Caco-2 (cell line): ENCODE measurements at regions of chr22 and their contacts with region 1.

Region 1: GRCh38 chr22:23591201-23591791 is 11.2 kb upstream of the IGLL1 start:
- DNase-seq: peak; percentile 63 to 76
- H3K4me3 ChIP-seq: no peak overlapping the region
- H3K4me3 Mint-ChIP-seq: no peak overlapping the region
- H3K27ac Mint-ChIP-seq: no peak overlapping the region
- H3K4me1 ChIP-seq: no peaks in the 10 kb centered on the region
- H3K4me1 Mint-ChIP-seq: peaks cover 6% of the 10 kb centered on the region
- H3K27me3 ChIP-seq: no peaks in the 10 kb centered on the region
- H3K27me3 Mint-ChIP-seq: no peaks in the 10 kb centered on the region
- CTCF ChIP-seq: peak; percentile 93 to 96

Region 2: GRCh38 chr22:23402275-23403151 is 188.8 kb before region 1 on chr22:
- CTCF ChIA-PET with region 1: no interaction called
- POLR2A ChIA-PET with region 1: no interaction called
- intact Hi-C with region 1: loop called (anchors 5 kb)
- DNase-seq: peak; percentile 89 to 93
- H3K4me3 ChIP-seq: peak overlapping the region; percentile 51
- H3K4me3 Mint-ChIP-seq: peak overlapping the region; percentile 70
- H3K27ac Mint-ChIP-seq: no peak overlapping the region
- H3K4me1 ChIP-seq: peaks cover 5% of the 10 kb centered on the region
- H3K4me1 Mint-ChIP-seq: no peaks in the 10 kb centered on the region
- H3K27me3 ChIP-seq: no peaks in the 10 kb centered on the region
- H3K27me3 Mint-ChIP-seq: no peaks in the 10 kb centered on the region
- CTCF ChIP-seq: peak; percentile 84 to 86

Region 3: DNA sequence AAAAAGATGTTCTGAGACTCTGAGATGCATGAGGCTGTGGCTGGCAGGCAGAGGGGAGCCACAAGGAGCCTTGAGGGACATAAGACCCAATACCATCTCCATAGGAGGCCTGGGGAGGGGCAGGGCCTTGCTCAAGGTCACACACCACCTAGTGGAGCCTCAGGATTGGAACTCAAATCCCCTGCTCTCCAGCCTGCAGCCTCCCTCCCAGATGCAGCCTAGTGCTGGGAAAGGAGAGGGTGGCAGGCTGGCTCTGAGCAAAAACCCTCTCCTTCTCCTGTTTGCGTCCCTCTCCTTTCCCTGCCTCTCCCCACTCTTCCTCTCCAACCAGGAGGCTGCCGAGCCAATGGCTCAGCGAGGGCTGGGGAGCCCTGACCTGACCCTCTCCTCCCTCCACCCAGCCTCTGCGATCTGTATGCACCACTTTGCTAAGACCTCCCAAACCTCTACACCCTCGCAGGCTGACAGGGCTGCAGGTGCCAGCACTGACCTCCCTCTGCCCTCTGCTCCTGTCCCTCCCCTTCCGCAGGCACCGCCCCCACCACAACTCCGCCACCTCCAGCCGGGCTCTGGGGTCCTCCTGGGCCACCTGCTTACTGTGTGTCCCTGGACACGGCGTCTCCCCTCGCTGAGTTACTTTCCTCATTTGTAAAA is 25.9 kb before region 1 on chr22:
- CTCF ChIA-PET with region 1: no interaction called
- POLR2A ChIA-PET with region 1: no interaction called
- intact Hi-C with region 1: no loop called
- DNase-seq: peak in 1 of 2 experiments; percentile 29
- H3K4me3 ChIP-seq: peak overlapping the region; percentile 39
- H3K4me3 Mint-ChIP-seq: peak overlapping the region; percentile 65
- H3K27ac Mint-ChIP-seq: no peak overlapping the region
- H3K4me1 ChIP-seq: no peaks in the 10 kb centered on the region
- H3K4me1 Mint-ChIP-seq: peaks cover 5% of the 10 kb centered on the region
- H3K27me3 ChIP-seq: no peaks in the 10 kb centered on the region
- H3K27me3 Mint-ChIP-seq: no peaks in the 10 kb centered on the region
- CTCF ChIP-seq: no peak